ENCODE measurements at regions of chr17 and their contacts with region 1.

Region 1: GRCh38 chr17:81401723-81402529 is 6.7 kb downstream of the BAHCC1 start:
- DNase-seq: no peak
- ATAC-seq: peak; percentile 31
- H3K4me3 ChIP-seq: peak overlapping the region; percentile 17
- H3K27ac ChIP-seq: peak overlapping the region; percentile 95
- H3K4me1 ChIP-seq: peaks cover 57% of the 10 kb centered on the region
- H3K27me3 ChIP-seq: no peaks in the 10 kb centered on the region
- CTCF ChIP-seq: peak; percentile 37

Region 2: GRCh38 chr17:81238817-81239600 is 162.9 kb before region 1 on chr17 and contains the starts of genes NDUFAF8 and TEPSIN:
- intact Hi-C with region 1: no loop called
- DNase-seq: peak; percentile 97
- ATAC-seq: peak; percentile 96
- H3K4me3 ChIP-seq: peak within 1 kb of the TSS; percentile 99
- H3K27ac ChIP-seq: peak within 1 kb of the TSS; percentile 86
- H3K4me1 ChIP-seq: peaks cover 19% of the 10 kb centered on the region
- H3K27me3 ChIP-seq: no peaks in the 10 kb centered on the region
- CTCF ChIP-seq: no peak
- total RNA-seq, gene NDUFAF8: 32.6 TPM
- total RNA-seq, gene TEPSIN: 40.2 TPM

Region 3: GRCh38 chr17:81346090-81346907 is 55.6 kb before region 1 on chr17:
- intact Hi-C with region 1: no loop called
- DNase-seq: peak; percentile 100
- ATAC-seq: peak; percentile 86
- H3K4me3 ChIP-seq: peak overlapping the region; percentile 88
- H3K27ac ChIP-seq: peak overlapping the region; percentile 85
- H3K4me1 ChIP-seq: peaks cover 16% of the 10 kb centered on the region
- H3K27me3 ChIP-seq: no peaks in the 10 kb centered on the region
- CTCF ChIP-seq: no peak

Region 4: GRCh38 chr17:81471804-81472456 is 70.0 kb after region 1 on chr17:
- intact Hi-C with region 1: no loop called
- DNase-seq: no peak
- ATAC-seq: peak; percentile 54
- H3K4me3 ChIP-seq: no peak overlapping the region
- H3K27ac ChIP-seq: no peak overlapping the region
- H3K4me1 ChIP-seq: no peaks in the 10 kb centered on the region
- H3K27me3 ChIP-seq: no peaks in the 10 kb centered on the region
- CTCF ChIP-seq: peak; percentile 18

Region 5: DNA sequence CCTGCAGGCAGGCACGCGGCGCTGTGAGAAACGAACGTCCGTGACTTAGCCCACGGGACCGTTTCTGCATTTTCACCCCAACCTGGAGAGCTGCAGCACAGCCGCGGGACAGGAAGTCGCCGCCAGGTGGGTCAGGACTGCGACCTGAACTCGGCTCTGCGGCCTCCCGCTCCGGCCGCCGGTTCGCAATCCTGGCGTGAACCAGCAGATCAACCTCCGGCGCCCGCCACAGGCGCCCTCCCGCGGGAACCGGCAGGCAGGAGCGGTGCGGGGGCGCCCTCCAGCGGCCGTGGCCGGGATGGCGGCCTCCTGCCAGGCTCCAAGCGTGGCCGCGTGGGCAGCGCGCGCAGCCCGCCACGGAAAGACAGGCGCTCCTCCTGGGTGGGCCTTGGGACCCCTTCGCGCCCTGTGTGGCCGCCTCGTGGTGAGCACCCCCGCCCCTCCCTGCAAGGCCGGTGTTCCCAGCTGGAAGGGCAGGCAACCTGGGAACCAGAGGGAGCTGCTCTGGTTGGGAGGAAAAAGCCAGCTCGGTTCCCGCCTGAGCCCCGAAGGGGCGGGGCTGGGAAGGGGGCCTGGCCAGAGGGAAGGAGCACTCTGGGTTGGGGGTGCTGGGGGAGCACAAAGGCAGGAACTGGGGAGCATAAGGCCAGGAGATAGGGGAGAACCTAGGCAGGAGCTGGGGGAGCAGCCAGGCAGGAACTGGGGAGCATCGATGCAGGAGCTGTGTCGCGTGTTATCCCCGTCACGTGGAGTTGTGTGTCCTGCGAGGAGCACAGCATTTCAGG is 82.5 kb after region 1 on chr17:
- intact Hi-C with region 1: loop called (anchors 5 kb)
- DNase-seq: peak; percentile 95
- ATAC-seq: peak; percentile 90
- H3K4me3 ChIP-seq: peak overlapping the region; percentile 39
- H3K27ac ChIP-seq: no peak overlapping the region
- H3K4me1 ChIP-seq: peaks cover 23% of the 10 kb centered on the region
- H3K27me3 ChIP-seq: no peaks in the 10 kb centered on the region
- CTCF ChIP-seq: peak; percentile 99

Measured in upper lobe of right lung (tissue), 1 donor.